GM12878 (cell line): ENCODE measurements at regions of chr7 and their contacts with region 1.

Region 1: GRCh38 chr7:149662591-149663095 is 110.7 kb downstream of the ZNF467 start:
- DNase-seq: peak; percentile 8
- ATAC-seq: peak; percentile 100
- H3K4me3 ChIP-seq: no peak overlapping the region
- H3K27ac ChIP-seq: no peak overlapping the region
- H3K4me1 ChIP-seq: no peaks in the 10 kb centered on the region
- H3K27me3 ChIP-seq: no peaks in the 10 kb centered on the region; a peak in 1 of 4 replicates
- CTCF ChIP-seq: peak; percentile 65 to 77 (median 75)
- EP300 ChIP-seq: no peak
- POLR2A ChIP-seq: no peak
- RAD21 ChIP-seq: peak; percentile 73

Region 2: GRCh38 chr7:149569025-149569725 is 93.5 kb before region 1 on chr7:
- CTCF ChIA-PET with region 1: no interaction called
- POLR2A ChIA-PET with region 1: no interaction called
- RAD21 ChIA-PET with region 1: no interaction called
- SMC1A ChIA-PET with region 1: no interaction called
- in situ Hi-C with region 1: no loop called
- intact Hi-C with region 1: no loop called
- DNase-seq: no peak
- ATAC-seq: no peak
- H3K4me3 ChIP-seq: no peak overlapping the region
- H3K27ac ChIP-seq: no peak overlapping the region
- H3K4me1 ChIP-seq: no peaks in the 10 kb centered on the region
- H3K27me3 ChIP-seq: no peaks in the 10 kb centered on the region
- CTCF ChIP-seq: no peak
- EP300 ChIP-seq: no peak
- POLR2A ChIP-seq: no peak
- RAD21 ChIP-seq: no peak

Region 3: GRCh38 chr7:149644778-149645177 is 17.9 kb before region 1 on chr7:
- CTCF ChIA-PET with region 1: interaction called, 15 read pairs
- POLR2A ChIA-PET with region 1: no interaction called
- RAD21 ChIA-PET with region 1: interaction called, 3 read pairs
- SMC1A ChIA-PET with region 1: interaction called, 4 read pairs
- in situ Hi-C with region 1: no loop called
- intact Hi-C with region 1: no loop called
- DNase-seq: no peak
- ATAC-seq: no peak
- H3K4me3 ChIP-seq: no peak overlapping the region
- H3K27ac ChIP-seq: no peak overlapping the region
- H3K4me1 ChIP-seq: no peaks in the 10 kb centered on the region
- H3K27me3 ChIP-seq: no peaks in the 10 kb centered on the region
- CTCF ChIP-seq: no peak
- EP300 ChIP-seq: no peak
- POLR2A ChIP-seq: no peak
- RAD21 ChIP-seq: no peak

Region 4: DNA sequence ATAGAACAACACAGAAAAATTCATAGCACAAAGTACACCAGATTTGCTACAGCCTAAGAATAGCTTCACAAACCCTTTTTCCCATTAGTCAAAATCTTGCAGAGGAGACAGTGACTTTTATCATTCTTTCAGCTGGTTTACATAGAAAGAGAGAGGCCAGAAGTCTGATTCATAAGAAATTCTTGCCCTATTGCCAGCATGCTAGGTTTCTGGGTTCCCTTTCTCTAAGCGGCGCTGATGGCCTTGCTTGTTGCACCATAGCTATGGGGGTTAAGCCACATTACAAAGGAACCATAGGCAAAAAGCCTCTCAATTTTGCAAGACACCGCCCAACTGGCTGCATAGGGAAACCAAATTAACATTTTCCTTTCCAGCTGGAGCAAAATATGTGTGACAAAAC is 23.4 kb after region 1 on chr7:
- CTCF ChIA-PET with region 1: interaction called, 13 read pairs
- POLR2A ChIA-PET with region 1: no interaction called
- RAD21 ChIA-PET with region 1: interaction called, 4 read pairs
- SMC1A ChIA-PET with region 1: interaction called, 9 read pairs
- in situ Hi-C with region 1: no loop called
- intact Hi-C with region 1: no loop called
- DNase-seq: no peak
- ATAC-seq: no peak
- H3K4me3 ChIP-seq: no peak overlapping the region
- H3K27ac ChIP-seq: no peak overlapping the region
- H3K4me1 ChIP-seq: no peaks in the 10 kb centered on the region
- H3K27me3 ChIP-seq: no peaks in the 10 kb centered on the region
- CTCF ChIP-seq: no peak
- EP300 ChIP-seq: no peak
- POLR2A ChIP-seq: no peak
- RAD21 ChIP-seq: no peak

Region 5: GRCh38 chr7:149714050-149714909 is 51.6 kb after region 1 on chr7:
- CTCF ChIA-PET with region 1: interaction called, 9 read pairs
- POLR2A ChIA-PET with region 1: no interaction called
- RAD21 ChIA-PET with region 1: interaction called, 10 read pairs
- SMC1A ChIA-PET with region 1: interaction called, 4 read pairs
- in situ Hi-C with region 1: no loop called
- intact Hi-C with region 1: no loop called
- DNase-seq: peak; percentile 32
- ATAC-seq: peak; percentile 95
- H3K4me3 ChIP-seq: peak overlapping the region; percentile 91; the same call in 1 of the 2 replicates
- H3K27ac ChIP-seq: peak overlapping the region; percentile 29; the same call in 1 of the 2 replicates
- H3K4me1 ChIP-seq: peaks cover 9% of the 10 kb centered on the region
- H3K27me3 ChIP-seq: no peaks in the 10 kb centered on the region
- CTCF ChIP-seq: no peak
- EP300 ChIP-seq: no peak
- POLR2A ChIP-seq: peak; percentile 41
- RAD21 ChIP-seq: no peak

Region 6: GRCh38 chr7:149748076-149748874 is 85.6 kb after region 1 on chr7:
- CTCF ChIA-PET with region 1: interaction called, 301 read pairs
- POLR2A ChIA-PET with region 1: interaction called, 3 read pairs
- RAD21 ChIA-PET with region 1: interaction called, 180 read pairs
- SMC1A ChIA-PET with region 1: interaction called, 17 read pairs
- in situ Hi-C with region 1: loop called (anchors 10 kb)
- intact Hi-C with region 1: no loop called
- DNase-seq: no peak
- ATAC-seq: no peak
- H3K4me3 ChIP-seq: no peak overlapping the region
- H3K27ac ChIP-seq: no peak overlapping the region
- H3K4me1 ChIP-seq: no peaks in the 10 kb centered on the region
- H3K27me3 ChIP-seq: no peaks in the 10 kb centered on the region; a peak in 2 of 4 replicates
- CTCF ChIP-seq: no peak
- EP300 ChIP-seq: no peak
- POLR2A ChIP-seq: no peak
- RAD21 ChIP-seq: no peak

Region 7: GRCh38 chr7:149753401-149754233 is 91.0 kb after region 1 on chr7:
- CTCF ChIA-PET with region 1: interaction called, 14 read pairs
- POLR2A ChIA-PET with region 1: interaction called, 3 read pairs
- RAD21 ChIA-PET with region 1: interaction called, 16 read pairs
- SMC1A ChIA-PET with region 1: interaction called, 10 read pairs
- in situ Hi-C with region 1: loop called (anchors 10 kb)
- intact Hi-C with region 1: no loop called
- DNase-seq: no peak
- ATAC-seq: peak; percentile 36; the same call in 1 of the 3 replicates
- H3K4me3 ChIP-seq: no peak overlapping the region
- H3K27ac ChIP-seq: no peak overlapping the region
- H3K4me1 ChIP-seq: no peaks in the 10 kb centered on the region
- H3K27me3 ChIP-seq: no peaks in the 10 kb centered on the region; a peak in 1 of 4 replicates
- CTCF ChIP-seq: peak; percentile 28 to 48 (median 40); a peak in 4 of 6 replicates
- EP300 ChIP-seq: no peak
- POLR2A ChIP-seq: no peak
- RAD21 ChIP-seq: no peak

Region 8: GRCh38 chr7:149799397-149800171 is 136.9 kb after region 1 on chr7:
- CTCF ChIA-PET with region 1: interaction called, 38 read pairs
- POLR2A ChIA-PET with region 1: interaction called, 3 read pairs
- RAD21 ChIA-PET with region 1: interaction called, 21 read pairs
- SMC1A ChIA-PET with region 1: interaction called, 6 read pairs
- in situ Hi-C with region 1: no loop called
- intact Hi-C with region 1: loop called (anchors 5 kb)
- DNase-seq: no peak
- ATAC-seq: peak; percentile 77
- H3K4me3 ChIP-seq: no peak overlapping the region
- H3K27ac ChIP-seq: no peak overlapping the region
- H3K4me1 ChIP-seq: no peaks in the 10 kb centered on the region
- H3K27me3 ChIP-seq: no peaks in the 10 kb centered on the region
- CTCF ChIP-seq: peak; percentile 54 to 67 (median 60)
- EP300 ChIP-seq: no peak
- POLR2A ChIP-seq: no peak
- RAD21 ChIP-seq: peak; percentile 50